ENCODE measurements at regions of chr2 and their contacts with region 1.

Region 1: GRCh38 chr2:177084607-177085006 is 128.0 kb upstream of the HNRNPA3 start:
- DNase-seq: no peak
- H3K4me3 ChIP-seq: no peak overlapping the region
- H3K27ac ChIP-seq: no peak overlapping the region
- H3K4me1 ChIP-seq: no peaks in the 10 kb centered on the region
- H3K27me3 ChIP-seq: no peaks in the 10 kb centered on the region
- CTCF ChIP-seq: no peak

Region 2: DNA sequence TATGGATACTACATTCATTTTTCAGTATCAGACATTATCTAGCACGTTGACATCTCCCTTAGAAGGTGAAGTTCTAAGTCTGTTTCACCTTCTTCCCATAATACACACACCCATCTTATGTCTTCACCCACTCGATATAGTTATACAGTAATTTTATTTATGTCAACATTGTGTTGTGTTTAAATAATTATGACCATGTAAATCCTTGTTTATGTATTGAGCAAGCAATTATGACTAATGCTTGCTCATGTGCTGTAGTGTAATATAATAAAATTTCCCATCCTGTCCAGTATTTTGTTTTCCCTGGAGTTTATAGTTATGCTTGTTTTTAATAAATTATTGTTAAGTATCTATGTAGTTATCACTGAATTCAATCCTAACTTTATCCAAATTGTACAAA is 652.2 kb before region 1 on chr2:
- CTCF ChIA-PET with region 1: no interaction called
- dilution Hi-C with region 1: no loop called
- in situ Hi-C with region 1: no loop called
- intact Hi-C with region 1: no loop called
- DNase-seq: peak; percentile 27
- H3K4me3 ChIP-seq: no peak overlapping the region
- H3K27ac ChIP-seq: no peak overlapping the region
- H3K4me1 ChIP-seq: no peaks in the 10 kb centered on the region
- H3K27me3 ChIP-seq: no peaks in the 10 kb centered on the region
- CTCF ChIP-seq: no peak

Region 3: GRCh38 chr2:177056481-177056929 is 28.1 kb before region 1 on chr2:
- CTCF ChIA-PET with region 1: interaction called, 26 read pairs
- dilution Hi-C with region 1: no loop called
- in situ Hi-C with region 1: no loop called
- intact Hi-C with region 1: no loop called
- DNase-seq: no peak
- H3K4me3 ChIP-seq: no peak overlapping the region
- H3K27ac ChIP-seq: no peak overlapping the region
- H3K4me1 ChIP-seq: no peaks in the 10 kb centered on the region
- H3K27me3 ChIP-seq: no peaks in the 10 kb centered on the region
- CTCF ChIP-seq: peak in 1 of 2 donors; percentile 1

Region 4: GRCh38 chr2:177148477-177149154 is 64.0 kb after region 1 on chr2:
- CTCF ChIA-PET with region 1: no interaction called
- dilution Hi-C with region 1: no loop called
- in situ Hi-C with region 1: no loop called
- intact Hi-C with region 1: no loop called
- DNase-seq: peak; percentile 72
- H3K4me3 ChIP-seq: peak overlapping the region; percentile 22 to 48 (median 39)
- H3K27ac ChIP-seq: no peak overlapping the region
- H3K4me1 ChIP-seq: peaks cover 5% of the 10 kb centered on the region
- H3K27me3 ChIP-seq: no peaks in the 10 kb centered on the region
- CTCF ChIP-seq: peak; percentile 92 to 94